Activated CD8-positive, alpha-beta T cell treated with anti-CD3 and anti-CD28 coated beads for 36 hours (primary cell): ENCODE measurements at regions of chr18 and their contacts with region 1.

Region 1: DNA sequence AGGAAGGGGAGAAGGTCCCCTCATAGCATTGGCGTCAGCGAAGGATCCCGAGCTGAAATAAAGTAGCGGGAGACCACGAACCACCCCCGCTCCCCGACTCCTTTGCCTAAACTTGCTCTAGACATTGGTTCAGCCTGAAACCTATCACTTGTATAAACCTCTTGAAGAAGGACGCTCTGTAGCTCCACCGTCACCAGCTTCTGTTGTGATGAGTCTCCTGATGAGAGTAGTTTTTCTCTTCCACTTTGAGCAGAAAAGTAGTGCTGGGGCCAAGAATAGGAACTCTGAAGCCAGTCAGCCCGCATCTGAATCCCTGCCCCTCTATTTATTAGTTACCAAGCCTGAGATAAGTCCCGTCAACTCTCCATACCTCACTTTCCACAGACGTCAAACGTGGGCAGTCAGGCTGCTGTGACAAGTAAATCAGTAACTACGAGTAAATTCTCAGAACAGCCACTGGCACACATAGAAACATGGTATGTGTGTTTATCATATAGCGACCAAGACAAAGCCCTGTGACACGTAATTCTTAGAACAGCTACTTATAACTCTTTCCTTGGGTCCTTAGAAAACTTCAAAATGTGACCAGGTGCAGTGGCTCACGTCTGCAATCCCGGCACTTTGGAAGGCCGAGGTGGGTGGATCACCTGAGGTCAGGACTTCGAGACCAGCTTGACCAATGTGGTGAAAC is 61.7 kb downstream of the CD226 start:
- DNase-seq: peak; percentile 80
- ATAC-seq: peak; percentile 69
- H3K4me3 Mint-ChIP-seq: peak overlapping the region; percentile 59
- H3K27ac Mint-ChIP-seq: peak overlapping the region; percentile 95
- H3K4me1 Mint-ChIP-seq: peaks cover 70% of the 10 kb centered on the region
- H3K27me3 Mint-ChIP-seq: no peaks in the 10 kb centered on the region
- CTCF ChIP-seq: no peak

Region 2: GRCh38 chr18:69715191-69715795 is 170.7 kb before region 1 on chr18:
- CTCF ChIA-PET with region 1: no interaction called
- POLR2A ChIA-PET with region 1: no interaction called
- intact Hi-C with region 1: no loop called
- DNase-seq: no peak
- ATAC-seq: no peak
- H3K4me3 Mint-ChIP-seq: no peak overlapping the region
- H3K27ac Mint-ChIP-seq: no peak overlapping the region
- H3K4me1 Mint-ChIP-seq: no peaks in the 10 kb centered on the region
- H3K27me3 Mint-ChIP-seq: no peaks in the 10 kb centered on the region
- CTCF ChIP-seq: no peak

Region 3: DNA sequence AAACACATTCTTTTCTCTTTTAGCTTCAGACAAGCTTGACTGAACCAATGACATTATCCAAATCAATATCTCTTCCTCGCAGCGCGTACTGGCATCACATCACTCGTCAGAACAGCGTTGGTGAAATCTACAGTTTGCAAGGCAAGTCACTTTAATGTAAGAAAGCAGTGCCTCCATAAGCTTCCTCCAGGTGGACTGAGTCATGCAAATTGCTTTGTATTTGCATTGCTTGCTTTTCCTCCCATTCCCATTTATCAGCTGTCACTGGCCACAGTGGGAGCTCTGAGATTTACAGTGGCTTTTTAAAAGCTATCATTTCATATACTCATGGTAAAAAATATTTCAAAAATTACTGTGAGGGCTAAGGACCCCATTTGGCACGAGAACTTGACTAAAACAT is 128.3 kb before region 1 on chr18:
- CTCF ChIA-PET with region 1: no interaction called
- POLR2A ChIA-PET with region 1: no interaction called
- intact Hi-C with region 1: no loop called
- DNase-seq: no peak
- ATAC-seq: no peak
- H3K4me3 Mint-ChIP-seq: no peak overlapping the region
- H3K27ac Mint-ChIP-seq: no peak overlapping the region
- H3K4me1 Mint-ChIP-seq: peaks cover 18% of the 10 kb centered on the region
- H3K27me3 Mint-ChIP-seq: no peaks in the 10 kb centered on the region
- CTCF ChIP-seq: no peak

Region 4: GRCh38 chr18:69898241-69898861 is 12.4 kb after region 1 on chr18:
- CTCF ChIA-PET with region 1: interaction called, 6 read pairs
- POLR2A ChIA-PET with region 1: interaction called, 13 read pairs
- intact Hi-C with region 1: no loop called
- DNase-seq: peak; percentile 55
- ATAC-seq: peak; percentile 32
- H3K4me3 Mint-ChIP-seq: peak overlapping the region; percentile 71
- H3K27ac Mint-ChIP-seq: peak overlapping the region; percentile 94
- H3K4me1 Mint-ChIP-seq: peaks cover 64% of the 10 kb centered on the region
- H3K27me3 Mint-ChIP-seq: no peaks in the 10 kb centered on the region
- CTCF ChIP-seq: no peak

Region 5: GRCh38 chr18:70172225-70172624 is 286.2 kb after region 1 on chr18:
- CTCF ChIA-PET with region 1: no interaction called
- POLR2A ChIA-PET with region 1: no interaction called
- intact Hi-C with region 1: no loop called
- DNase-seq: no peak
- ATAC-seq: no peak
- H3K4me3 Mint-ChIP-seq: no peak overlapping the region
- H3K27ac Mint-ChIP-seq: no peak overlapping the region
- H3K4me1 Mint-ChIP-seq: no peaks in the 10 kb centered on the region
- H3K27me3 Mint-ChIP-seq: no peaks in the 10 kb centered on the region
- CTCF ChIP-seq: no peak